ENCODE measurements at regions of chr1 and their contacts with region 1.

Region 1: DNA sequence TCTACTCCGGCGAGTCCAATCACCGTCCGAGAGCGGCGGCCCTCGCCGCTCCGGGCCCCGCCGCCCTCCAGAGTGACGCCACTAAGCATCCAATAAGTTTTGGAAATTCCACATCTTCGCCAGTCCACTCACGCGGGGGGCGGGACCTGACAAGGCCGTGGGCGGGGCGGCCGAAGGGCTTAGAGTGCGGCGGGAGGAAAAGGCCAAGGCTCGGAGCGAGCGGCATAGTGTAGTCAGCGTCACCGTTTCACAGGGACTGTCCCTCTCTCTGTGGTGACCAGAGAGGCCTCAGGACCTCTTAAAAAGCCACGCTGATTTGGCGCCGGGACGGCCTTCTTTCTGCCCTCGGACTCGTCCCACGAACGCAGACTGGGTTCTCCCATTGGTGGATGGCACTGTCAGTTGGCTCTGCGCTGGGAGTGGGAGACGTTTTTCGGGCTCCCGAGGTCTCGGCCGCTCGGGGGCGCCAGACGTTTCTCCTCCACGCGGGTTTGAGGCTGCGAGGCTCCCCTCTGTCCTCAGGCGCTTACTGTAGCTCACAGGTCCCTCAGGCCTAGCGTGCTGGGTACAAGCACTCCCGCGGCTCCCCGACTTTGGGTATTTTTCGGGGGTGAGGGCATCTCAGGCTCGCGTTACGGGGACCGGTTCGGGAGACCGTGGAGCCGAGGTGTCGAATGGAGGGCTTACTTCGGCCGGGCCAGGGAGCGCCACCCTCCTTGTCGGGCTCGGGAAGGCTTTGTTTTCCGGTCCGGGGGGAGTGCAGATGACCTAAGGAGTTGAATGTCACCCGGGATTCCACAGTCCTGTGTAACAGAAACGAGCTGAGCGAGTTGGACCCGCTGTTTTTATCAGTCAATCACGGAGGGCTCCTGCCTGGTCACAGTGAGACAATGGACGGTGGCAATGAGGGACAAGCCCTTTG is 488 bp upstream of the TRIM45 start:
- DNase-seq: peak; percentile 98 to 99
- ATAC-seq: peak; percentile 98
- H3K4me3 ChIP-seq: peak overlapping the region; percentile 48 to 61
- H3K27ac ChIP-seq: peak overlapping the region in 1 of 2 donors; percentile 78
- H3K4me1 ChIP-seq: no peaks in the 10 kb centered on the region
- H3K27me3 ChIP-seq: no peaks in the 10 kb centered on the region

Region 2: GRCh38 chr1:116737020-116737854 is 384.8 kb before region 1 on chr1:
- intact Hi-C with region 1: loop called in 1 of 2 experiments (anchors 10 kb)
- DNase-seq: peak in 1 of 2 donors; percentile 65
- ATAC-seq: peak; percentile 53
- H3K4me3 ChIP-seq: no peak overlapping the region
- H3K27ac ChIP-seq: no peak overlapping the region
- H3K4me1 ChIP-seq: no peaks in the 10 kb centered on the region
- H3K27me3 ChIP-seq: no peaks in the 10 kb centered on the region

Region 3: DNA sequence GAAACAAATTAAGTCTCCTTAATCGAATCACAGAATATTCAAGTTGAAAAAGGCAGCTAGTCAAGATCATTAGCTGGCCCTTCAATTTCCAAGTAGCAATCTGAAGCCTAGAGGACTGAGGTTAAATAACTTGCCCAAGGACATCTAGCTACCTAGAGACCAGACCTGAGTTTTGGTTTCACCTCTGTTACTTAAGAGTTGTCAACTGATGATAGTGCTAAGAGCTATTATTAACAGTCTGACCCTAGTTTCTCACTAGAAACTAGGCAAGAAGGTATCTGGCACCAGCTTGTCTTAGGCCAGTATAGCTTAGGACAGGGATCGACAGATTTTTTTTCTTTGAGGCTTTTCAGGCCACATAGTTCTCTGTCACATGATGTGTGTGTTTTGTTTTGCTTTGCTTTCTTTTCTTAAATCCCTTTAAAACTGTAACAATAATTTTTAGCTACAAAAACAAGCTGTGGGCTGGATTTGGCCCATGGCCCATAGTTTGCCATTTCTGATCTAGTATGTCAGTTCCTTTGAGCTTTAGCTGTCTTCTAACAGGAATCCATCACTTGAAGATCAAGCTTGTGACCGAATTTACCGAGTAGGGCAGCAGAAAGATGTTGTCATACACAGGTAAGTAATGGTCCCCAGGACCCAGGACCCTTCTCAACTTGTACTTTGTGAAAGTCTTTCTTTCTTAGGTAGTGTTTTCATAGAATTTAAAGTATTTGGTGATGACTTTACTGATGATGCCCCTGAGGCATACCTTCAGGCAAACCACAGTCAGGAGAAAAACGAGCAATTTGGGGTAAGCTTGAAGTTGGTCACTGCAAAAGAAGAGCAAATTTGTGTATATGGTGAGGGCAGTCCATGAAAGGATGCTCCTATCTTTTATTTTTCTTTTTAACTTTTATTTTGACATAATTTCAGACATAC is 23.5 kb before region 1 on chr1:
- intact Hi-C with region 1: loop called in 1 of 2 experiments (anchors 2 kb)
- DNase-seq: no peak
- ATAC-seq: no peak
- H3K4me3 ChIP-seq: no peak overlapping the region
- H3K27ac ChIP-seq: no peak overlapping the region
- H3K4me1 ChIP-seq: peaks cover 2 to 4% of the 10 kb centered on the region in 2 donors
- H3K27me3 ChIP-seq: no peaks in the 10 kb centered on the region

Region 4: GRCh38 chr1:117359561-117360289 is 237.7 kb after region 1 on chr1:
- intact Hi-C with region 1: no loop called
- DNase-seq: no peak
- ATAC-seq: no peak
- H3K4me3 ChIP-seq: no peak overlapping the region
- H3K27ac ChIP-seq: no peak overlapping the region
- H3K4me1 ChIP-seq: no peaks in the 10 kb centered on the region
- H3K27me3 ChIP-seq: no peaks in the 10 kb centered on the region